PC-3 (cell line): ENCODE measurements at regions of chr15 and their contacts with region 1.

Region 1: GRCh38 chr15:34223904-34224596 is 766 bp upstream of the EMC4 start:
- DNase-seq: no peak
- ATAC-seq: no peak
- H3K4me3 ChIP-seq: peak overlapping the region; percentile 96
- H3K27ac ChIP-seq: peak overlapping the region; percentile 78
- H3K4me1 ChIP-seq: peaks cover 20% of the 10 kb centered on the region
- H3K27me3 ChIP-seq: no peaks in the 10 kb centered on the region
- CTCF ChIP-seq: no peak

Region 2: DNA sequence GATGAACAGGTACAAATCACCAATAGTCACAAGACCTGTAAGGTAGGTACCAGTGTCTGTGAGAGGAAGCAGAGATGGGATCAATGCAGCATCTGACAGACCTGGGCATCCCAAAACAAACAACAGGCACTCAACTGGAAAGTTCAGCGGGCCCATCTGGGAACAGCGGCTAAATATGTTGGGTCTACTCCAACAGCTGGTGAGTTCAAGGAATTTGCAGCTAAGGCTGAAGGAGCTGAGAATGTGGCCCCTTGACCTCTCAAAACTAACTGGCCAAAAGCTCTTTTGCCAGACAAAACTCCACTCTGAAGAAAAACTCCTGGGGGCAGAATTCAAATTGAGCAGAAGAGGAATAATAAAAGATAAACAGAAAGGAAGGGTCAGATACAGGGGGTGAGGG is 209.5 kb before region 1 on chr15:
- CTCF ChIA-PET with region 1: no interaction called
- POLR2A ChIA-PET with region 1: no interaction called
- intact Hi-C with region 1: no loop called
- DNase-seq: no peak
- ATAC-seq: no peak
- H3K4me3 ChIP-seq: no peak overlapping the region
- H3K27ac ChIP-seq: no peak overlapping the region
- H3K4me1 ChIP-seq: no peaks in the 10 kb centered on the region
- H3K27me3 ChIP-seq: no peaks in the 10 kb centered on the region
- CTCF ChIP-seq: no peak

Region 3: GRCh38 chr15:34969340-34970097 is 745.5 kb after region 1 on chr15 and contains the start of gene AQR:
- CTCF ChIA-PET with region 1: no interaction called
- POLR2A ChIA-PET with region 1: no interaction called
- intact Hi-C with region 1: loop called (anchors 10 kb)
- DNase-seq: peak; percentile 99
- ATAC-seq: peak; percentile 100
- H3K4me3 ChIP-seq: peak within 1 kb of the TSS; percentile 91
- H3K27ac ChIP-seq: no peak within 1 kb of the TSS
- H3K4me1 ChIP-seq: 0 out of 2 replicates have a peak, but pooled peaks cover 5% of the 10 kb centered on the region
- H3K27me3 ChIP-seq: no peaks in the 10 kb centered on the region
- CTCF ChIP-seq: peak; percentile 92
- total RNA-seq, gene AQR: 26.1 and 34.2 TPM in 2 replicates